Esophagus squamous epithelium (tissue), 5 donors: ENCODE measurements at regions of chr4 and their contacts with region 1.

Region 1: DNA sequence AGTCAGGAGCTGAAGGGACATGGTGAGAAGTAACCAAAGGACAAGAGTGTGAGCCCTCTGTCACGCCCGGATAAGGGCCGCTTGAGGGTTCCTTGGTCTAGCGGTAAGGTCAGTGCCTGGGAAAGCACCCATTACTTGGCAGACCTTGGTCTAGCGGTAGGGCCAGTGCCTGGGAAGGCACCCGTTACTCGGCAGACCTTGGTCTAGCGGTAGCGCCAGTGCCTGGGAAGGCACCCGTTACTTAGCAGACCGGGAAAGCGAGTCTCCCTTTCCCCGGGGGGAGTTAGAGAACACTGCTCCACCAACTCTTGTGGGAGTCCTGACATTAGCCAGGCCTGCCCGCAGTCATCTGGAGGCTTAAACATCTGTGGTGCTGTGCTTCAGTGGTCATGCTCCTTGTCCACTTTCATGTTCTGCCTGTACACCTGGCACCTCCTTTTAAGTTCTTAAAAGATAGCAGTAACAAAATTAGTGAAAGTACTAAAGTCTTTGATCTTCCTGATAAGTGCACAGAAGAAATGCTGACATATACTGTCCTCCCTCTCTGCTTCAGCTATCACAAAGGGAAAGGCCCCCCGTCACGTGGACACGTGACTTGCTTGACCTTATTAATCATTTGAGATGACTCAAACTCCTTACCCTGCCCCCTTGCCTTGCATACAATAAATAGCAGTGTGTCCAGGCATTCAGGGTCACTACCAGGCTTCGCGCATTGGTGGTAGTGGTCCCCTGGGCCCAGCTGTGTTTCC is 9.3 kb upstream of the SEC24B start:
- DNase-seq: no peak
- H3K4me3 ChIP-seq: no peak overlapping the region
- H3K27ac ChIP-seq: no peak overlapping the region
- H3K4me1 ChIP-seq: peaks cover 0 to 5% (median 2%) of the 10 kb centered on the region in 3 donors
- H3K27me3 ChIP-seq: no peaks in the 10 kb centered on the region
- CTCF ChIP-seq: no peak
- POLR2A ChIP-seq: no peak

Region 2: GRCh38 chr4:109022961-109023360 is 401.3 kb before region 1 on chr4:
- intact Hi-C with region 1: no loop called
- DNase-seq: no peak
- H3K4me3 ChIP-seq: no peak overlapping the region
- H3K27ac ChIP-seq: no peak overlapping the region
- H3K4me1 ChIP-seq: no peaks in the 10 kb centered on the region
- H3K27me3 ChIP-seq: no peaks in the 10 kb centered on the region
- CTCF ChIP-seq: no peak
- POLR2A ChIP-seq: no peak

Region 3: GRCh38 chr4:109977854-109978501 is 553.7 kb after region 1 on chr4:
- intact Hi-C with region 1: loop called (anchors 10 kb)
- DNase-seq: no peak
- H3K4me3 ChIP-seq: no peak overlapping the region
- H3K27ac ChIP-seq: no peak overlapping the region
- H3K4me1 ChIP-seq: no peaks in the 10 kb centered on the region
- H3K27me3 ChIP-seq: no peaks in the 10 kb centered on the region
- CTCF ChIP-seq: peak in 5 of 6 experiments; percentile 24 to 77 (median 69)
- POLR2A ChIP-seq: no peak